Right ventricle myocardium inferior (tissue), 1 donor: ENCODE measurements at regions of chr16 and their contacts with region 1.

Region 1: GRCh38 chr16:4511441-4512082 is 27.0 kb downstream of the CDIP1 start:
- DNase-seq: no peak
- ATAC-seq: peak; percentile 64

Region 2: GRCh38 chr16:4475880-4476788 is 35.4 kb before region 1 on chr16 and contains the start of gene HMOX2:
- intact Hi-C with region 1: loop called (anchors 5 kb)
- DNase-seq: peak; percentile 97
- ATAC-seq: peak; percentile 95
- total RNA-seq, gene HMOX2: 126 TPM